Activated CD4-positive, alpha-beta memory T cell treated with anti-CD3 and anti-CD28 coated beads, Interleukin-2, amount 10 ng/mL, durations not matched to agents 7 days and 5 days (primary cell): ENCODE measurements at regions of chr3 and their contacts with region 1.

Region 1: DNA sequence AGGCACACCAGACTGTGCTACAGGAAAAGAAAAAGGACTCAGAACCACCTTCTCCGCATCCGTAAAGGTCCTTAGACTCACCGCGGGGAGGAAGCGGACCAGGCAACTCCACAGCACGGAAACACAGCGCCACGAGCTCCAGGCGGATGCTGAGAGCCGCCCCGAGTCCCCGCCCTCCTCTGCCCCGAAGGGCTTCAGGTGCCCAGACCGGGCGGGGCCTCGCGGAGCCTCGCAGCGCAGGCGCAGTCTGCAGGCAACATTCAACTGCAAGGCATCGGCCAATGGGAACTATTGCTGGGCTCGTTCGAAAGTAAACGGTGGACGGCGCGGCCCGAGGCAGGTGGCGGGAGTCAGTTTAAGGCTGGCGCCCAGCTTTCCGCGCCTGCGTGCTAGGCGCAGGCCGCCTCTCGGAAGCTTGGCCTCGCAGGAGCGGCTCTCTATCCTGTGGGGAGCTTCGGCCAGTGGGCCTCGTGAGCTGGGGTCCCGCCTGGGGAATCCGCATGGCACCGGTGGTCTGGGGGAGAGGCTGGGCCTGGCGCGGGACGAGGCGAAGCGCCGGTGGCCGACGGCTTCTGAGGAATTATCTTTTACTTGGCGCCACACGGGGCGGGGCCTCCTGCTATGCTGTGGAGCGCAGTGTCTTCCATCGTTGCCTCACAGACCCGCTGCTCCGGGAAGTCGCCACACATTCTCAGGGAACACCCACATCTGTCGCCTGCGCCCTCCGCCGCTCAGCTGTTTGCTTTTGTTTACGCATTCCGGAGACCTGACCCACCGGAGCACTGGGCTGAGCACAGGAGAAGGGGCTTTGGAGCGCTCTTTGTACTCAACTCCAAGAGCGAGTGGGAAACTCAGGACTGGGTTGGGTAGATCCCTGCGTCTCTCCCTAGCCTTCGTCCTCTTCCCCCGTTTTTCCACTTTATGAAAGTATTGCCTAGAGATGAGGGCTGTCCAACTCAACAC is at the start of gene TRIM59:
- DNase-seq: peak; percentile 99
- H3K4me3 Mint-ChIP-seq: peak within 1 kb of the TSS; percentile 89
- H3K27ac Mint-ChIP-seq: peak within 1 kb of the TSS; percentile 95
- H3K4me1 Mint-ChIP-seq: peaks cover 39% of the 10 kb centered on the region
- H3K27me3 Mint-ChIP-seq: no peaks in the 10 kb centered on the region
- total RNA-seq, gene TRIM59: 54.3 to 56.6 TPM

Region 2: DNA sequence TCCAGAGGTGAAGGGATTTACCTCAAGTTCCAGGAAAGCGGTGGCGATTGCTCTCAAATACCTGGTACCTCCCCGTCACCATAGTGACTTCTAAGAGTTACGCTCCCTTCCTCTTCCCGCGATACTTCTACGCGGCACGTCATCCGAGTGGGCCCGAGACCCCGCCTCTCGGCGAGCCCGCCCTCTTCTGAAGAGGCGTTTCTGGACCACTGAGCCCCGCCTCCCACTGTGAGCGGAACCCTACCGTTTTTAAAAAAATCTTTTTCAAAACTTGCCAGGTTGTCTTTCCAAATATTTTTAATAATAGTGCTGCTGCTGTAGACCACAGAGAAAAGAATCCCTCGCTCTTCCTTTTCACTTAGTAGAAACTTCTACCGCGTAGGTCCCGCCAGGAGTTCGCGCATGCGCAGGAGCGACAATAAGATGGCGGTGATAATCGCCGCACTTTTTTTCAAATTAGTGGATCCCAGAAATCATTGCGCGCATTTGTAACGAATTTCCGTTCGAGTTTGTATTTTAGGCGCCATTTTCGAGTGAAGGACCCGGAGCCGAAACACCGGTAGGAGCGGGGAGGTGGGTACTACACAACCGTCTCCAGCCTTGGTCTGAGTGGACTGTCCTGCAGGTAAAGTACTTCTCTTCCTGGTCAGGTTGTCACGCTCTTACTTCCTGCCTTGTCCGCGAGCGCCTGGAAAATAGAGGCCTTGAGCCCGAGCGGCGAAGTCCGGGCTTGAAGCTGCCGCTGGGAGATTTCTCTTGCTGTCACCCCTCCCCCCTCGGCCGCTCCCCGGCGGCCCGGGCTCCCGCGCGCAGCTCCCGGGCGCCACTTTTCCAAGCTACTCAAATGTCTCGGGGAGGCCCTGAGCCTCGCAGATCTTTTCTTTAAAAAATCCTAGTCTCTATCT is 50.5 kb before region 1 on chr3 and contains the starts of genes IFT80 and SMC4:
- CTCF ChIA-PET with region 1: interaction called, 11 read pairs
- POLR2A ChIA-PET with region 1: interaction called, 211 read pairs
- DNase-seq: peak; percentile 97
- H3K4me3 Mint-ChIP-seq: peak within 1 kb of the TSS; percentile 94
- H3K27ac Mint-ChIP-seq: peak within 1 kb of the TSS; percentile 89
- H3K4me1 Mint-ChIP-seq: peaks cover 44% of the 10 kb centered on the region
- H3K27me3 Mint-ChIP-seq: no peaks in the 10 kb centered on the region
- total RNA-seq, gene IFT80: 22.8 to 25.9 TPM
- total RNA-seq, gene SMC4: 217 to 222 TPM

Region 3: GRCh38 chr3:160434071-160434470 is 15.8 kb before region 1 on chr3:
- CTCF ChIA-PET with region 1: interaction called, 3 read pairs
- POLR2A ChIA-PET with region 1: interaction called, 70 read pairs
- DNase-seq: no peak
- H3K4me3 Mint-ChIP-seq: no peak overlapping the region
- H3K27ac Mint-ChIP-seq: no peak overlapping the region
- H3K4me1 Mint-ChIP-seq: peaks cover 47% of the 10 kb centered on the region
- H3K27me3 Mint-ChIP-seq: no peaks in the 10 kb centered on the region

Region 4: DNA sequence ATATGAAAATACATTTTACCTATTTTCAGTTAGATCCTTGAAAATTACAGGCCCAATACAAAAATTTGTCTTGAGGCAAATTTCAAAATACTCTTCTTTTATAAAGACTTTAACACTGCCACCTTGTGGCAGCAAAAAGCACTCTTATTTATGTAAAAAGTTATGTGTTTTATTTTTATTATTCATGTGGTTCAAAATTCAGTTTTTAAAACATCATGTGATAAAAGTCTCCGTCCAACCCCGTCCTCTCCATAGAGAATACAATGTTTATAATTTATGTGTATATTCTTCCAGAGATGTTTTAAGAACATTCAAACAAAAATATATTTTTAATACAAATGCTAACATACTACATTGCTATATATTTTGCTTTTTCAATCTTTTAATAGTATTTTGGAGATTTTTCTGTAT is 36.5 kb after region 1 on chr3:
- CTCF ChIA-PET with region 1: interaction called, 13 read pairs
- POLR2A ChIA-PET with region 1: interaction called, 5 read pairs
- DNase-seq: no peak
- H3K4me3 Mint-ChIP-seq: no peak overlapping the region
- H3K27ac Mint-ChIP-seq: no peak overlapping the region
- H3K4me1 Mint-ChIP-seq: peaks cover 3% of the 10 kb centered on the region
- H3K27me3 Mint-ChIP-seq: peaks cover 2% of the 10 kb centered on the region

Region 5: DNA sequence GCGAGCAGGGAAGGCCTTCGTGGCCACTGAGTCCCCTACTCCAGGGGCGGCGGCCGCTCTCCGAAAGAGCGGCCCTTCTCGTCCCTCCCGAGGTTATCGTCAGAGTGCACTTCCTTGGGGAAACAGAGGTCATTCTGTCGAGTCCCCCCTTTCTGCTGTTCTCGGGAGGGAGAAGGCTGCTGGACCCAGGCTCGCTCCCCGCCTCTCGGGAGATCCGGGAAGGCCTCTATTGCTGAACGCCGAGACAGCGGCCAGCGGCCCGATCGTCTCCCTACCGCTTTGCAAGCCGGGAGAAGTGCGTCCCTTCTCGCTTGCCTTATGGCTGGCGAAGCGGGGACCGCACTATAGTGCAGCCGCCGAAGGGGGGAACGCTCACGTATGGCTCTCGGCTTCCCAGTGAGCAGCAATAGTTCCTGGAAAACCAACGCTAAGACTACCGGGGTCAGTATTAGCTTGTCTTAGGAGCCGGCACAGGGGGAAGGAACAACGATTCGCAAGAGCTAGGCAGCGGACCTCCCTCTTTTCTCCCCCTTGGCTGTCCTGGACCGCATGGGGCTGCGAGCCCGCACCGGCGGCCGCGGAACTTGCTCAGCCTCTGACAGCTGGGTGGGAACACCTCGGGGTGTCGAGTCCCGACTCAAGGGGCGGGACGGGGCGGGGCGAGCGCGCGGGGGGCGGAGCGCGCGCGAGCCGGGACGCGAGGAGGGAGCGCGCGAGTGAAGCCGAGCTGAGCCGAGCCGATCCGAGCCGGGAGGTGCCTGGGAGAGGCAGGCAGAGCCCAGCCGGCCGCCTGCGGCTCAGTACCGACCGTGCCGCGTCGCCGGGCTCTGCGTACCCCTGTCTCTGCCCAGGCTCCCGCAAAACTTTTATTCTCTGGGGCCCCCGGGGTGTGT is 305.2 kb after region 1 on chr3:
- CTCF ChIA-PET with region 1: no interaction called
- POLR2A ChIA-PET with region 1: interaction called, 18 read pairs
- DNase-seq: peak; percentile 94
- H3K4me3 Mint-ChIP-seq: peak overlapping the region; percentile 98
- H3K27ac Mint-ChIP-seq: peak overlapping the region; percentile 84
- H3K4me1 Mint-ChIP-seq: peaks cover 31% of the 10 kb centered on the region
- H3K27me3 Mint-ChIP-seq: peaks cover 13% of the 10 kb centered on the region